ENCODE measurements at regions of chr14 and their contacts with region 1.

Region 1: GRCh38 chr14:39186941-39187525 is 12.0 kb downstream of the PNN start:
- DNase-seq: no peak
- H3K4me3 ChIP-seq: no peak overlapping the region
- CTCF ChIP-seq: no peak

Region 2: GRCh38 chr14:39102969-39103957 is 83.8 kb before region 1 on chr14 and contains the start of gene SEC23A:
- in situ Hi-C with region 1: no loop called
- DNase-seq: peak; percentile 57
- H3K4me3 ChIP-seq: peak within 1 kb of the TSS; percentile 80
- CTCF ChIP-seq: no peak

Region 3: GRCh38 chr14:39266871-39267591 is 80.0 kb after region 1 on chr14:
- in situ Hi-C with region 1: loop called (anchors 5 kb)
- DNase-seq: peak; percentile 50
- H3K4me3 ChIP-seq: peak overlapping the region; percentile 63
- CTCF ChIP-seq: no peak